ENCODE measurements at regions of chr2 and their contacts with region 1.

Region 1: DNA sequence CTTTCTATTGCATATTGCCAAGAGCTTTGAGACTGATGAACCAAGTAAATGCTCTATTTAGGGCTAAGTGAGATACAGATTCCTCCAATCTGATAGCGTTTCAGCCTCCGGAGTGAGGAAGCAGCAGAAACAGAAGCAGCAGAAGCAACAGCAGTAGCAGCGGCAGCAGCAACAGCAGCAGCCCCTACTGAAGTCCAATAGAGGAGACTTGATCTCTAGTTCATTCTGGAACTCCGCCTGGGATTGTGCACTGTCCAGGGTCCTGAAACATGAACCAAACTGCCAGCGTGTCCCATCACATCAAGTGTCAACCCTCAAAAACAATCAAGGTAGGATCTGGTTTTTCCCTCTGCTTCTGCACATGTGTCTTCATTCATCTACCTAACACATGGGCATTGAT is at the start of gene DPP10:
- DNase-seq: peak; percentile 13
- ATAC-seq: peak; percentile 61
- H3K4me3 ChIP-seq: no peak within 1 kb of the TSS
- H3K27ac ChIP-seq: no peak within 1 kb of the TSS
- H3K4me1 ChIP-seq: no peaks in the 10 kb centered on the region
- H3K27me3 ChIP-seq: no peaks in the 10 kb centered on the region; a peak in 2 of 5 replicates
- CTCF ChIP-seq: no peak
- EP300 ChIP-seq: no peak
- POLR2A ChIP-seq: no peak
- RAD21 ChIP-seq: no peak
- total RNA-seq, gene DPP10: 0.84 and 1.7 TPM in 2 replicates

Region 2: DNA sequence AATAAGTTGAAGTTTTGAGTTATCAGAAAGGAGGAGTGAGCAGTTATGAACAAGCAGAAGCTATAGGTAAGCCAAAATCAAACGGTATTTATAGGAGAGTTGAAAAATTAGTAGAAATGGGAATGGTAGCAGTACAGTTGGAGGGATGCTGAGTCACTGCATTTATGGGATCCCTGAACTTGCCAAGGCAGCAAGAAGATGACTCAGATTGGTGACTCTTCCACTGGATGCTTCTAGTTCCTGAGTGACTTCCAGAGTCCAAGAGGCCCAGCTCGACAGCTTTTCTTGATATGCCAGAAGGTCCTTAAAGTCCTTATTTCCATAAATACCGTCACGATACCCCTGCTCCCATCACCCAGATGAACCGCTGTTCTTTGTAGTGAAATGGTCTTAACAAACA is 583.7 kb before region 1 on chr2:
- CTCF ChIA-PET with region 1: no interaction called
- POLR2A ChIA-PET with region 1: no interaction called
- in situ Hi-C with region 1: no loop called
- intact Hi-C with region 1: no loop called
- DNase-seq: no peak
- ATAC-seq: no peak
- H3K4me3 ChIP-seq: no peak overlapping the region
- H3K27ac ChIP-seq: no peak overlapping the region
- H3K4me1 ChIP-seq: no peaks in the 10 kb centered on the region
- H3K27me3 ChIP-seq: no peaks in the 10 kb centered on the region
- CTCF ChIP-seq: no peak
- EP300 ChIP-seq: no peak
- POLR2A ChIP-seq: no peak
- RAD21 ChIP-seq: no peak

Region 3: GRCh38 chr2:114068438-114068837 is 374.1 kb before region 1 on chr2:
- CTCF ChIA-PET with region 1: no interaction called
- POLR2A ChIA-PET with region 1: no interaction called
- in situ Hi-C with region 1: no loop called
- intact Hi-C with region 1: loop called (anchors 5 kb)
- DNase-seq: no peak
- ATAC-seq: peak; percentile 62; the same call in 2 of the 3 replicates
- H3K4me3 ChIP-seq: no peak overlapping the region
- H3K27ac ChIP-seq: no peak overlapping the region
- H3K4me1 ChIP-seq: no peaks in the 10 kb centered on the region
- H3K27me3 ChIP-seq: peaks cover 0 to 15% of the 10 kb centered on the region in 2 experiments; a peak in 2 of 5 replicates
- CTCF ChIP-seq: no peak
- EP300 ChIP-seq: no peak
- POLR2A ChIP-seq: no peak
- RAD21 ChIP-seq: no peak